Activated B cell treated with CpG ODN at 0.5 μM for 24 hours (primary cell): ENCODE measurements at regions of chr16 and their contacts with region 1.

Region 1: DNA sequence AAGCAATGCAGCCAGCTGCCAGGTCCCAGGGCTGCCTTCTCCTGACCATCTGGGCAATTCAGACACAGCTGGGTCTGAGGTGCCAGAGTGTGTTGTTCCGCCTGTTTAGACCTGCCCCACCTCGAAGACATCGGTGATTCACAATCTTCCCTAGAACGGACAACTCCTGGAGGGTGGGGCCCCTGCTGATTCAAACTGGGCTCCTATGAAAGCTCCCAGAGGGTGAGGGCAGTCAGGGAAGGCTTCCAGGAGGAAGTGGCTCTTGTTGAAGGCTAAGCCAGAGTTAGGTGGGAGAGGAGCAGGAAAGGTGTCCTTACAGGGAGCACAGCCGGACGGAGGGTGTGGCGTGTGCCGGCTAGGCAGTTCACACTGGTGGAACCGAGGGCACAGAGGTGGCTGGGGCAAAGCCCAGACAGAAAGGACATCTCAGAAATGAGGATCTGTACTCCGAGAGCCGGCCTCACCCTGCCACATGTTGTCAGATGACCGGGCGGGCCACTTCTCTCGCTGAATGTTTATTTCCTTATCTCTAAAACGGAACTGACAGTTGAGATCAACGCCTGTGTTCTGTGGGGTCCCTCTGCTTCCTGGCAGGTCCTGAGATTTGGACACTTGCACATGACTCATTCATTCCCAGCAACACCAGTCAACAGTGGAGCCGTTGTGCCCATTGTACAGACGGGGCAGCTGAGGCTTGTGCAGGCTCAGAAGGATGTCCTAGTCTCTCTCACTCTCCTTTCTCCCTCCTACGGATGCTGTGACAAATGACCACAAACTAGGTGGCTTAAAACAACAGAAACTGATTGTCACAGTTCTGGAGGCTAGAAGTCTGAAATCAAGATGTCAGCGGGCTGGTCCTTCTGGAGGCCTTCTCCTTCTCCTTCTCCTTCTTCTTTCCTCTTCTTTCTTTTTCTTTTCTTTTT is 26.9 kb upstream of the LITAF start:
- DNase-seq: no peak
- ATAC-seq: peak; percentile 69
- H3K4me3 Mint-ChIP-seq: peak overlapping the region; percentile 60
- H3K27ac Mint-ChIP-seq: peak overlapping the region; percentile 61
- H3K4me1 Mint-ChIP-seq: peaks cover 42% of the 10 kb centered on the region
- H3K27me3 Mint-ChIP-seq: no peaks in the 10 kb centered on the region
- CTCF ChIP-seq: no peak

Region 2: GRCh38 chr16:11597239-11598101 is 16.2 kb before region 1 on chr16:
- CTCF ChIA-PET with region 1: no interaction called
- POLR2A ChIA-PET with region 1: no interaction called
- intact Hi-C with region 1: loop called (anchors 2 kb)
- DNase-seq: no peak
- ATAC-seq: peak; percentile 85
- H3K4me3 Mint-ChIP-seq: no peak overlapping the region
- H3K27ac Mint-ChIP-seq: peak overlapping the region; percentile 30
- H3K4me1 Mint-ChIP-seq: peaks cover 16% of the 10 kb centered on the region
- H3K27me3 Mint-ChIP-seq: peaks cover 2% of the 10 kb centered on the region
- CTCF ChIP-seq: no peak

Region 3: GRCh38 chr16:11629071-11629962 is 15.7 kb after region 1 on chr16:
- CTCF ChIA-PET with region 1: no interaction called
- POLR2A ChIA-PET with region 1: interaction called, 4 read pairs
- intact Hi-C with region 1: loop called (anchors 2 kb)
- DNase-seq: no peak
- ATAC-seq: peak; percentile 70
- H3K4me3 Mint-ChIP-seq: peak overlapping the region; percentile 50
- H3K27ac Mint-ChIP-seq: peak overlapping the region; percentile 59
- H3K4me1 Mint-ChIP-seq: peaks cover 48% of the 10 kb centered on the region
- H3K27me3 Mint-ChIP-seq: no peaks in the 10 kb centered on the region
- CTCF ChIP-seq: no peak